ENCODE measurements at regions of chr3 and their contacts with region 1.

Region 1: DNA sequence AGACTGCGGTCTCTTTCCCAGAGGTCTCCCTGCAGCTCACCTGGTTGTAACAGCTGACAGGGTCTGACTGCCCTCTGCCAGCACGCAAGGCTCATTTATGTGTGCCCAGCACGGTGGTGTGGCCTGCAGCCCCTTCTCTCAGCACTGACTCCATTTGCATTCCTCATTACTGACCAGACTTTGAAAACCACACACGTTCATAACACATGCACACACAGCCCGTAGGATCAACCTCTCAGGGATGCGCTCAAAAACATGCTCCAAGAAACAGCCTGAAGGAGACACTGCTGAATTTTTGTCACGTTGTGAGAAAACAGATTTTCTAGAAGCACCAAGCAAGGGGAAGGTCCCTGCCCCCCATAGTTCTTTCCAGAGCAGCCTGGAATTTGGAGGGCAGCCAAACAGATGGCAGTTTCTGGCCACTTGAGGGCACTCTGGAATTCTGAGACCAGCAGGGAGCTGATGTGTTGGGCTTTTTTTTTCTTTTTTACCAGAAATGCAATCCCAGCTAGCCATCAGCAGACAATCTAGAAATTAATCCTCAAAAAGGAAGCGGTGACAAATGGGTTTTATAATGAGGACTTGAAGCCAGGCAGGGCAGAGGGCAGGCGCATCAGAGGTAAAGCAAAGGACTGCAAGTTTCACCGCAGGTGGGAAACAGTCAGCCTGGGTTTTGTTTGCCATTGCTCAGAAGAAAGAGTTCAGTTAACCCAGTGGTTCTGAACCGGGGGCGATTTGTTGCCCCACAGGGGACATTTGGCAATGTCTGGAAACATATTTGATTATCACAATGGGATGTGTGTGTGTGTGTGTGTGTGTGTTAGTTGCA is 170.5 kb upstream of the PROK2 start:
- DNase-seq: peak; percentile 38 to 66
- H3K4me3 ChIP-seq: no peak overlapping the region
- H3K27ac ChIP-seq: no peak overlapping the region
- H3K4me1 ChIP-seq: peaks cover 7 to 16% (median 11%) of the 10 kb centered on the region in 4 experiments
- H3K27me3 ChIP-seq: no peaks in the 10 kb centered on the region
- CTCF ChIP-seq: peak; percentile 62 to 81 (median 72)
- EP300 ChIP-seq: no peak
- POLR2A ChIP-seq: no peak
- RAD21 ChIP-seq: peak; percentile 82 to 83

Region 2: DNA sequence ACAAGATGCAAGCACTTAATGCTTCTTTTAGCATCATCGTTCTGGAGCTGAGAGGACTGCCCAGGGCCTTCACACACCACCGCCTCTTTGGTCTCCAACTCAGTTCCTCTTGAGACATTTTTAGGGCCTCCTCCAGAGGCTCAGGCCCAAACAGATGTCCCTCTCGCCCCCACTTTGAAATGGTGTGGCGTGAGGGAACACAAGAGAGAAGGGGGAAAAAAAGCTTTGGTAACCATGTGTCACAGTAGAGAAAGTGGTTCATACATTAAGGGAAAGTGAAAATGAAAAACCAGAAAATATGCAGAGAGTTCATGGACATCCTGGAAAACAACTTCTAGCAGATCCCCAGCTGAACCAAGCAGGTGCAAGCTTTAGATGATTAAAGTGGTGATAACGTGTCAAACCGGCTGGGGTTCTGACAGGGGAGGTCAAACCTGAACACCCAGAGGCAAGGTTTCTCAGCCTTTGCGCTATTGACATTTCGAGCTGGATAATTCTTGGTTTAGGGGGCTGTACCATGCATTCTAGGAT is 338.8 kb before region 1 on chr3:
- CTCF ChIA-PET with region 1: no interaction called
- POLR2A ChIA-PET with region 1: no interaction called
- DNase-seq: no peak
- H3K4me3 ChIP-seq: no peak overlapping the region
- H3K27ac ChIP-seq: no peak overlapping the region
- H3K4me1 ChIP-seq: peaks cover 0 to 4% (median 0%) of the 10 kb centered on the region in 4 experiments; a peak in 2 of 7 replicates
- H3K27me3 ChIP-seq: no peaks in the 10 kb centered on the region
- CTCF ChIP-seq: no peak
- EP300 ChIP-seq: no peak
- POLR2A ChIP-seq: no peak
- RAD21 ChIP-seq: no peak

Region 3: GRCh38 chr3:71942432-71943187 is 12.8 kb before region 1 on chr3:
- CTCF ChIA-PET with region 1: interaction called, 71 read pairs
- POLR2A ChIA-PET with region 1: no interaction called
- DNase-seq: no peak
- H3K4me3 ChIP-seq: no peak overlapping the region
- H3K27ac ChIP-seq: no peak overlapping the region
- H3K4me1 ChIP-seq: peaks cover 0 to 3% (median 1%) of the 10 kb centered on the region in 4 experiments; a peak in 1 of 7 replicates
- H3K27me3 ChIP-seq: peaks cover 0 to 1% (median 0%) of the 10 kb centered on the region in 4 experiments; a peak in 1 of 7 replicates
- CTCF ChIP-seq: peak; percentile 40 to 59 (median 50); a peak in 3 of 4 replicates
- EP300 ChIP-seq: no peak
- POLR2A ChIP-seq: no peak
- RAD21 ChIP-seq: peak; percentile 23 to 56; a peak in 3 of 4 replicates

Region 4: GRCh38 chr3:72265256-72266015 is 310.0 kb after region 1 on chr3:
- CTCF ChIA-PET with region 1: interaction called, 28 read pairs
- POLR2A ChIA-PET with region 1: no interaction called
- DNase-seq: no peak
- H3K4me3 ChIP-seq: no peak overlapping the region
- H3K27ac ChIP-seq: no peak overlapping the region
- H3K4me1 ChIP-seq: peaks cover 0 to 6% (median 0%) of the 10 kb centered on the region in 4 experiments; a peak in 1 of 7 replicates
- H3K27me3 ChIP-seq: no peaks in the 10 kb centered on the region
- CTCF ChIP-seq: peak in 2 of 3 experiments; percentile 41 to 52; a peak in 3 of 4 replicates
- EP300 ChIP-seq: no peak
- POLR2A ChIP-seq: no peak
- RAD21 ChIP-seq: peak; percentile 80 to 81

Measured in H1 (cell line).